CD8-positive, alpha-beta T cell (primary cell): ENCODE measurements at regions of chr11 and their contacts with region 1.

Region 1: DNA sequence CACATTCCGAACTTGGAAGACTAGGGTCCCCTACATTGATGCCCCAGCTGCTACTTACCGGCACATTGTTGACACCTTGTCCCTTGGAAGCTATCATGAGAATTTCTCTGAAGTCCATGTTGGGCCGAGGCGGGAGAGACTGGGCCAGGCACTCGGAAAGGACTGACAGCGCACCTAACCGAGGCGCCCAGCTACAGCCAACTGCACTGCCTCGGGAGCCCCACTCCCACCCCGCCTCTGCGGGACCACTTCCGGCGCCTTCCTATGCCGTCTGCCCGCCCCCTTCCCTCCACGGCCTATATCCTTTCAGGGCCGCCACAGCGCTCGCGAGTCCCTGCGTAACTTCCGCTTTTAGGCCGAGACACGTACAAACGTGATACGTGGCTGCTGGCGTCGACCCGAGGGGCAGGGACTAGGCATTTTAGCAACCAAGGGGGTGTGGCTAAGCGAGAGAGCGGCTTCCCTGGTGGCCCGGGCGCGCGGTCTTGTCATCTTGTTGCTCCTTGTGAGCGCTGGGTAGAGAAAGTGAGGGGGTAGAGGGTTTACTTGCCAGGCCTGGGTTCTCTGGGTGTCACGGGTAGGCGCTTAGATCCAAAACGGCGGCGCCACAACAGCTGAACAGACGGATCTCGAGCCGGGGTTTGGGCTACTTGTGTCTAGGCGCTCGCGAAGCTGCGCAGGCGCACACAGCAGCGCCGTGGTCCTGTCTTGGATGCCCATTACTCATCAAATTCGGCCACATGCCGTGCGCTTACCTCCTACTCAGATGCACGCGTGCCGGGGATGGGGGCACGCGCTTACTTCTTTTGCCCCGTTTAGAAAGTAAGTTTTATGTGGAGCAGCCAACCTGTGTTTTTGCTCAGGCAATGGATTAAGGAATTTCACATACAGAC is at the start of gene SPTY2D1:
- DNase-seq: peak; percentile 94 to 100 (median 97)
- ATAC-seq: peak; percentile 92
- H3K4me3 ChIP-seq: peak within 1 kb of the TSS; percentile 85 to 87
- H3K4me3 Mint-ChIP-seq: peak within 1 kb of the TSS; percentile 88
- H3K27ac ChIP-seq: peak within 1 kb of the TSS; percentile 92 to 100
- H3K27ac Mint-ChIP-seq: peak within 1 kb of the TSS; percentile 97
- H3K4me1 ChIP-seq: peaks cover 15% of the 10 kb centered on the region
- H3K4me1 Mint-ChIP-seq: peaks cover 34% of the 10 kb centered on the region
- H3K27me3 ChIP-seq: no peaks in the 10 kb centered on the region
- H3K27me3 Mint-ChIP-seq: no peaks in the 10 kb centered on the region
- CTCF ChIP-seq: no peak
- total RNA-seq, gene SPTY2D1: 74.9 to 76.9 TPM

Region 2: DNA sequence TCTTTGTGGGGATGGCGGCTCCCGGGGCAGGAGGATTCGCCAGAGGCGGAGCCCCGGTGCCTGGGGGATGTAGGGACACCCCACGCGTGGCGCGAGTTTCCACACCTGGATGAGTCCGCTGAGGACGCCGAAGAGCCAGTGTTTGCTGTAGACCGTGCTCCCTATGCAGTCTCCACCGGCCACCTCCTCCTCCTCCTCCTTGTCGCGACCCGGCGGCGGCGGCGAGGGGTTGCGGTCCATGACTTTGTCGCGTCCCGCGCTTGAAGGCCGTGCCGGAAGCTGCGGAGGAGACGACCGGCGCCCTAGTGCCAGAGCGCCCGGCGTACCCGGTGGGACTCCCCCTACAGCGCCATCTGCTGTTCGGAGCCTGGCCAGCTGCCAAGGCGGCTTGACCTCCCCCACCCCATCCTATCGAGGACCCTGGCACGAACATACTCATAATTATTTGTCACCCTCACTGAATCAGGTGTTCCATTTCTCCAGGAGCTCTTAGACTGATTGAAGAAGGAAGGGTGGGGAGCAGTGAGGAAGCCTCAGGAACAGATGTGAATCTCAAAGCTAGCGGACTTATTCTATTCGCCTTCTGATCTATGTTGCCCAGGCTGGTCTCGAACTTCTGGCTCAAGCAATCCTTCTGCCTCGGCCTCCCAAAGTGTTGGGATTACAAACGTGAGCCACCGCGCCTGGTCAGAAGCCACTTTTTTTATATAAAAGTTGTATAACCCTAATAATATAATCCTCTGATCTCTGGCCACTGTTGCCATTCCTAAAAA is 528.4 kb before region 1 on chr11 and contains the start of gene SAAL1:
- CTCF ChIA-PET with region 1: no interaction called
- POLR2A ChIA-PET with region 1: no interaction called
- intact Hi-C with region 1: loop called (anchors 2 to 10 kb)
- DNase-seq: peak; percentile 73 to 93 (median 91)
- ATAC-seq: peak; percentile 97
- H3K4me3 ChIP-seq: peak within 1 kb of the TSS; percentile 75 to 99
- H3K4me3 Mint-ChIP-seq: peak within 1 kb of the TSS; percentile 86
- H3K27ac ChIP-seq: peak within 1 kb of the TSS; percentile 61 to 62
- H3K27ac Mint-ChIP-seq: peak within 1 kb of the TSS; percentile 87
- H3K4me1 ChIP-seq: peaks cover 10% of the 10 kb centered on the region
- H3K4me1 Mint-ChIP-seq: peaks cover 40% of the 10 kb centered on the region
- H3K27me3 ChIP-seq: no peaks in the 10 kb centered on the region
- H3K27me3 Mint-ChIP-seq: peaks cover 14% of the 10 kb centered on the region
- CTCF ChIP-seq: peak; percentile 86
- total RNA-seq, gene SAAL1: 23.8 to 28.2 TPM

Region 3: GRCh38 chr11:18526521-18527296 is 107.7 kb before region 1 on chr11 and contains the start of gene TSG101:
- CTCF ChIA-PET with region 1: no interaction called
- POLR2A ChIA-PET with region 1: interaction called, 20 read pairs
- intact Hi-C with region 1: loop called (anchors 1 kb)
- DNase-seq: peak; percentile 84 to 96 (median 95)
- ATAC-seq: peak; percentile 78
- H3K4me3 ChIP-seq: peak within 1 kb of the TSS; percentile 83 to 90
- H3K4me3 Mint-ChIP-seq: peak within 1 kb of the TSS; percentile 100
- H3K27ac ChIP-seq: peak within 1 kb of the TSS; percentile 97 to 99
- H3K27ac Mint-ChIP-seq: peak within 1 kb of the TSS; percentile 100
- H3K4me1 ChIP-seq: peaks cover 23% of the 10 kb centered on the region
- H3K4me1 Mint-ChIP-seq: peaks cover 54% of the 10 kb centered on the region
- H3K27me3 ChIP-seq: no peaks in the 10 kb centered on the region
- H3K27me3 Mint-ChIP-seq: no peaks in the 10 kb centered on the region
- CTCF ChIP-seq: no peak
- total RNA-seq, gene TSG101: 36.2 to 36.5 TPM

Region 4: DNA sequence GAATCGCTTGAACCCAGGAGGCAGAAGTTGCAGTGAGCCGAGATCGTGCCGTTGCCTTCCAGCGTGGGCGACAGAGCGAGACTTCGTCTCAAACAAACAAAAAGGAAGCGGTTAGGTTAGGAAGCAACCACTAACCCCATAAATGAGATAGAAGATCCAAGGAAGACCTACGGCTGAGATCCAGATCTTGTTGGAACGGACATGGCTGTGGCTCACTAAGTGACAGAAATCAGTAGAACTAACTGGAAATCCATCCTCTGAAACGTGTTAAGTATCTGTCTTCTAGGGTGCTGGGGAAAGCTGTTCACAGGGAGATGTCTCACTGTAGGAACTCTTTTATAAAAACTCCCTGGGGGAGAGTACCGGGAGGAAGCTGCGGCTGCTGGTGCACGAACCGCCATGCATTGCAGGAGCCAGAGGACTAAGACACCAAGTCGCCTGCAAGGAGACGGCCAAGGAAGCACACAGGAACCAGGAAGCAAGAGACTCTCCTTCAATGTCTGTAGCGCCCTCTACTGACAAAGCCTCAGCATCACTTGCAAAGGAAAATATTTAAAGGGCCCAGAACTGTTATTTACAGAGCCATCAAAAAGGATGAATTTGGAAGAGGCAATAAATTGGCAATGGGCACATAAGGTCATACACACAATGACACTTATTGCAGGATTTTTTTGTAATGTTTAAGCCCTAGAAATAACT is 16.6 kb after region 1 on chr11:
- CTCF ChIA-PET with region 1: interaction called, 10 read pairs
- POLR2A ChIA-PET with region 1: interaction called, 3 read pairs
- intact Hi-C with region 1: no loop called
- DNase-seq: peak in 5 of 9 experiments; percentile 21 to 66 (median 35)
- ATAC-seq: peak; percentile 40
- H3K4me3 ChIP-seq: no peak overlapping the region
- H3K4me3 Mint-ChIP-seq: no peak overlapping the region
- H3K27ac ChIP-seq: no peak overlapping the region
- H3K27ac Mint-ChIP-seq: no peak overlapping the region
- H3K4me1 ChIP-seq: no peaks in the 10 kb centered on the region
- H3K4me1 Mint-ChIP-seq: peaks cover 2% of the 10 kb centered on the region
- H3K27me3 ChIP-seq: no peaks in the 10 kb centered on the region
- H3K27me3 Mint-ChIP-seq: no peaks in the 10 kb centered on the region
- CTCF ChIP-seq: no peak

Region 5: DNA sequence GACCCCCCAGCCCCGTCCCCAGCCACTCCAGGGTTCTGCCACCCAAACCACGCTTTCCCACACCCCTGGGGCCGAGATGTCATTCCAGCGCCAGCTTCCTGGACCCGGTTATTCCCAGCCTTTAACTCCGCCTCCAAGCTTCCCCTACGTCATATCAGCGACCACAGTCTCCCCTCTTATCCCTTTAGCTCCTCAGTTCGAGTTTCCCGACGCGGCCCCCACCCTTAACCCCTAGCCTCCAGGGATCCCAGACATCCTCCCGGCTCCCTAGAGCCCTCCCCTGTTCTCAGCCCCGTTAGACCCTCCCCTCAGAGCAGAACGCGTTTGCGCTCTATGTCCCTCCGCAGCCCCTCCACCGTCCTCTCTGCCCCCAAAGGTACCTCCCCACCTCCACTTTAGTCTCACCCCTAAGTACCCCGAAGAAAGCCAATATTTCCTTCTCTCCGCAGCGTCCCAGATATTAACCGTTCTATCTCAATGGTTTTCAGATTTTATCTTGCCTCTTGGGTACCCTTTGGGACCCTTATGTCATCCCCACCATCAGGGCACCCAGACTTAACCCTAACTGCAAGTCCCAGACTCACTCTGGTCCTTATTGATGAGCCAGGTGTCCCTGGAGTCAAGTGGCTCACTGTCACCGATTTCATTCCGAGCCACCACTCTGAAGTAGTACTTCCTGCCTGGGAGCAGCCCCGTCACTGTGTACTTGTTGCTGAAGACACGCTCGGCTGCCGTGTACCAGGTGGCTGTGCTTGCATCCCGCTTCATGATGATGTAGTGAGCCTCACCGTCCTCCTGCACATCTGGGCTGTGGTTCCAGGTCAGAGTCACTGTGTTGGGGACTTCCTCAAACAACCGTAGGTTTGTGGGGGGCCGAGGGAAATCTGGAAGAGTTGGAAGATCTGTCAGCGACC is 72.2 kb after region 1 on chr11:
- CTCF ChIA-PET with region 1: interaction called, 3 read pairs
- POLR2A ChIA-PET with region 1: interaction called, 10 read pairs
- intact Hi-C with region 1: no loop called
- DNase-seq: peak; percentile 29 to 83 (median 57)
- ATAC-seq: peak; percentile 81
- H3K4me3 ChIP-seq: peak overlapping the region; percentile 55 to 83
- H3K4me3 Mint-ChIP-seq: peak overlapping the region; percentile 94
- H3K27ac ChIP-seq: peak overlapping the region; percentile 39 to 56
- H3K27ac Mint-ChIP-seq: peak overlapping the region; percentile 94
- H3K4me1 ChIP-seq: peaks cover 7% of the 10 kb centered on the region
- H3K4me1 Mint-ChIP-seq: peaks cover 22% of the 10 kb centered on the region
- H3K27me3 ChIP-seq: no peaks in the 10 kb centered on the region
- H3K27me3 Mint-ChIP-seq: no peaks in the 10 kb centered on the region
- CTCF ChIP-seq: no peak